Vagina (tissue), 2 donors: ENCODE measurements at regions of chr15 and their contacts with region 1.

Region 1: GRCh38 chr15:97084650-97085049 is 754.1 kb downstream of the NR2F2 start:
- DNase-seq: no peak
- H3K4me3 ChIP-seq: no peak overlapping the region
- H3K27ac ChIP-seq: no peak overlapping the region
- H3K4me1 ChIP-seq: no peaks in the 10 kb centered on the region
- H3K27me3 ChIP-seq: no peaks in the 10 kb centered on the region
- CTCF ChIP-seq: no peak
- POLR2A ChIP-seq: no peak

Region 2: DNA sequence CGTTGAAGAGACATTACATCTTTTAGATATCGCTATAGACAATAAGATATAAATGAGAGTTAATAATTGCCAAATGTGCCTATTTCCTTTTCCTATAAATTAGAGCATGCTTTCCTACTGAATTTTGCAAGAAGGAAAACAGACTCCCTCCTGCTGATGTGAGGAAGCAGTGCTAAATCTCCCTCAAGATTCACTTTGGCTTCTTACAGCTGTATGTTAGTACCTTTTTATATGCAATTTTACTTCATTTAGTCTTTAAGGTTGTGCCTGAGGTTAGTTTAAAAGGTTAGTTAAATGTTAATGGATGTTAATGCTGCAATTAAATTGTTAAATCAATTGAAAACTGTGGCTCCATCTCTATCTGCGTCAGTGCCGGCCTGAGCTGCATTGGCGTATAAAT is 25.4 kb before region 1 on chr15:
- intact Hi-C with region 1: no loop called
- DNase-seq: no peak
- H3K4me3 ChIP-seq: no peak overlapping the region
- H3K27ac ChIP-seq: no peak overlapping the region
- H3K4me1 ChIP-seq: no peaks in the 10 kb centered on the region
- H3K27me3 ChIP-seq: no peaks in the 10 kb centered on the region
- CTCF ChIP-seq: no peak
- POLR2A ChIP-seq: no peak

Region 3: GRCh38 chr15:97248376-97248775 is 163.7 kb after region 1 on chr15:
- intact Hi-C with region 1: no loop called
- DNase-seq: no peak
- H3K4me3 ChIP-seq: no peak overlapping the region
- H3K27ac ChIP-seq: no peak overlapping the region
- H3K4me1 ChIP-seq: no peaks in the 10 kb centered on the region
- H3K27me3 ChIP-seq: no peaks in the 10 kb centered on the region
- CTCF ChIP-seq: no peak
- POLR2A ChIP-seq: no peak

Region 4: DNA sequence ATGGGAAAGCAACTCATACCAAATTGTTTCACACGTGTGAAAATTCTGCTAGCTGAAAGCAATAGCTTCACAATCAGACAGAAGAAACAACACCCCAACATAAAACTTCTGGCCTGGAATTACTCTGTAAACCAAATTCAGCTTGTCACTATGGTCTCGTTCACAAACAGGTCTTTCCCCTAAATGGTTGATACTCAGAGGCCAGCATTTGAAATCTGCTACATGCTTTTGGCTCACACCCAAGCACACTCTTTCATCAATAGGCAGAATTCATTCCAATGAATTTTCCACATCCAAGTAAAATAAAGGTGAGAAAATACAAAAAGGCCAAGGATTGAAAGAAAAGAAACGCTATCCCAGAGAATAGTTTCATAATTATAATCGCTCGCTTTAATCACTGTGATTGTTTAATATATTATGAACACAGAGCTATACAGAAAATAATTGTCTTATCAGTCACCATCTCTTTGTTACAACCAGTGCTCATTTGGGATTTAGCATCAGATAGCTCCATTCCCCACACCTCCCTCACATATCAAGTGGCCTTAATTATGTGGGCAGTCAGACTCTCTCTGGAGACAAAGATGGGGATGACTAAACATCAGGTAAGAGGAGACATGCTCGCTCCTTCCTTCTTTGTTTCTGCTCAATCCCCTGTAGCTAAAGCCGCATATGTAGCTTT is 372.0 kb after region 1 on chr15:
- intact Hi-C with region 1: loop called (anchors 5 kb)
- DNase-seq: no peak
- H3K4me3 ChIP-seq: no peak overlapping the region
- H3K27ac ChIP-seq: no peak overlapping the region
- H3K4me1 ChIP-seq: no peaks in the 10 kb centered on the region
- H3K27me3 ChIP-seq: no peaks in the 10 kb centered on the region
- CTCF ChIP-seq: no peak
- POLR2A ChIP-seq: no peak